Activated naive CD4-positive, alpha-beta T cell treated with anti-CD3 and anti-CD28 coated beads for 36 hours (primary cell): ENCODE measurements at regions of chr22 and their contacts with region 1.

Region 1: GRCh38 chr22:22463855-22464540 is 44.5 kb downstream of the ZNF280B start:
- DNase-seq: peak; percentile 75
- H3K4me3 Mint-ChIP-seq: no peak overlapping the region
- H3K27ac Mint-ChIP-seq: no peak overlapping the region
- H3K4me1 Mint-ChIP-seq: no peaks in the 10 kb centered on the region
- H3K27me3 Mint-ChIP-seq: peaks cover 27% of the 10 kb centered on the region

Region 2: GRCh38 chr22:22417495-22418162 is 46.4 kb before region 1 on chr22:
- CTCF ChIA-PET with region 1: interaction called, 11 read pairs
- intact Hi-C with region 1: no loop called
- DNase-seq: no peak
- H3K4me3 Mint-ChIP-seq: no peak overlapping the region
- H3K27ac Mint-ChIP-seq: no peak overlapping the region
- H3K4me1 Mint-ChIP-seq: no peaks in the 10 kb centered on the region
- H3K27me3 Mint-ChIP-seq: peaks cover 41% of the 10 kb centered on the region

Region 3: DNA sequence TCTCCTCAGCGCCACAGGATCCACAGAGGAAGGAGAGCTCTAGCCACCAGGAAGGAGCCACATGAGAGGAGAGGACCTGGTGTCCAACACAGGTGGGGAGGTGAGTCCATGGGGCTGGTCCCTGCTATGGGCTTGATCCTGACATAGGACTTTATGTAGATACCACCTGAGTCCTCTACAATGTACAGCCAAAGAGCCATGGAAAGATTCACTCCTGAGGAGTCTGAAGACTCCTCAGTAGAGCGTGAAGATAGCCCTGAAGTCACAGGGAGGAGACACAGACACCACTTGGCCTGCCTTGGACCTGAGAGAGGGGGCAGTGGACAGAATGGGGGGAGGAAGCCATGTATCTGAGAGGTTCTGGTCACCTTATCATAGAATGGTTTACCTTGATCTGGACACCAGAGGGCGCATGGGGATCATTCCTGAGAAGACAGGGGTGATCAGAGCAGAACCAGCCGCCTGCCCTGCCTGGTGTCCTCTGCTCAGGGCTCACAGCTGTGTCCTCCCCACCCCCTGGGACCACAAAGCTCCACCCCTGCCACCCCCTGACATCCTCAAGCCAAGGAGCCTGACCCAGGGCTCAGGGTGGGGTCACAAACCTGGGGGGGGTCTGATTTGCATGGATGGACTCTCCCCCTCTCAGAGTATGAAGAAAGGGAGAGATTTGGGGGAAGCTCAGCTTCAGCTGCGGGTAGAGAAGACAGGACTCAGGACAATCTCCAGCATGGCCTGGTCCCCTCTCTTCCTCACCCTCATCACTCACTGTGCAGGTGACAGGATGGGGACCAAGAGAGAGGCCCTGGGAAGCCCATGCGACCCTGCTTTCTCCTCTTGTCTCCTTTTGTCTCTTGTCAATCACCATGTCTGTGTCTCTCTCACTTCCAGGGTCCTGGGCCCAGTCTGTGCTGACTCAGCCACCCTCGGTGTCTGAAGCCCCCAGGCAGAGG is 32.5 kb before region 1 on chr22:
- CTCF ChIA-PET with region 1: interaction called, 19 read pairs
- intact Hi-C with region 1: no loop called
- DNase-seq: peak; percentile 79
- H3K4me3 Mint-ChIP-seq: no peak overlapping the region
- H3K27ac Mint-ChIP-seq: no peak overlapping the region
- H3K4me1 Mint-ChIP-seq: no peaks in the 10 kb centered on the region
- H3K27me3 Mint-ChIP-seq: peaks cover 2% of the 10 kb centered on the region

Region 4: DNA sequence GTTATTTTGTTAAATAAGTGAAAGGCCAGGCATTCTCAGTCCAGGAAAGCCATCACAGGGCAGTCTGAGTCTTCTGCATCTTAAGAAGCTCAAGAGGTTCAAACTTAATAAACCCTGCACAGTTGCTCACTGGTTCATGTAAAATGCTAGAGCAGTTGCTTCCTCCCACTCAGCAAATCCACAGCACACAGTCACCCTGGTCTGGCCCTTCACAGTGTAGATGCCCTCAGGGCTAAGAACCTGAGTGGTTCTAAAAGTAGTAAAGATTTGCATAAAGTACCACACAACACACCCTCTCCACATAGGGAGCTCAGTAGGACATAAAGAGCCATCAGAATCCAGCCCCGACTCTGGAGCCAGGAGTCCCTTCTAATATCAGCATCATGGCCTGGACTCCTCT is 14.2 kb before region 1 on chr22:
- CTCF ChIA-PET with region 1: interaction called, 13 read pairs
- intact Hi-C with region 1: no loop called
- DNase-seq: no peak
- H3K4me3 Mint-ChIP-seq: no peak overlapping the region
- H3K27ac Mint-ChIP-seq: no peak overlapping the region
- H3K4me1 Mint-ChIP-seq: no peaks in the 10 kb centered on the region
- H3K27me3 Mint-ChIP-seq: peaks cover 28% of the 10 kb centered on the region

Region 5: GRCh38 chr22:22484023-22484422 is 20.0 kb after region 1 on chr22:
- CTCF ChIA-PET with region 1: no interaction called
- intact Hi-C with region 1: no loop called
- DNase-seq: no peak
- H3K4me3 Mint-ChIP-seq: no peak overlapping the region
- H3K27ac Mint-ChIP-seq: no peak overlapping the region
- H3K4me1 Mint-ChIP-seq: no peaks in the 10 kb centered on the region
- H3K27me3 Mint-ChIP-seq: no peaks in the 10 kb centered on the region

Region 6: DNA sequence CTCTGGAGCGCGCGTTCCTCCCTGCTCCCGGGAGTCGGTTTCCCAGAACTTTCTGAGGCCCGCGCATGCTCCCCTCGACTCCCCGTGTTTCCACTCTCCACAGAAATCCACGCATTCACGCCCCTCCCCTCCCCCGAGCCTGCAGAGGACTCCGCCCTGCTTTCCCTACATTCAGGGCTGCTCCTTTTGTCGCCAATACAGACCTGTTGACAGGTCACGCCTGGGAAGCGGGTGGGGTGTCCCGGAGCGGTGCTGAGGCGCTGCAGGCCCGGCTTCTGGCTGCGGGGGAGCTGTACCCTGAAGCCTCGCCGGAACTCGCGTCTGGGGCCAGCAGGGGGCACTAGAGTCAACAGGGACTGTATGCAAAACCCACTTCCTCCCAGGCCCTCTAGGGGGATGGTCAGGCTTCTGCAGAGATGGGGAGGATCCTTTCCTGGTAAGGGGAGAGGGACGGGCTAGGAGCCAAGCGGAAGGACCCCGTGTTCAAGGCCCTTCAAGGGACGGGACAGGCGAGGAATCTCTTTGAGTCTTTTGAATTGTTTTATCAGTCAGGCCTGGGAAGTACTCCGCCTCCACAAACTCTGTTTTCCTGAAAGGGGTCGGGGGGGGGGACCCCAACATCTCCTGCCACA is 95.1 kb after region 1 on chr22 and contains the start of gene PRAME:
- CTCF ChIA-PET with region 1: interaction called, 3 read pairs
- intact Hi-C with region 1: loop called (anchors 2 kb)
- DNase-seq: peak; percentile 89
- H3K4me3 Mint-ChIP-seq: no peak within 1 kb of the TSS
- H3K27ac Mint-ChIP-seq: no peak within 1 kb of the TSS
- H3K4me1 Mint-ChIP-seq: peaks cover 2% of the 10 kb centered on the region
- H3K27me3 Mint-ChIP-seq: no peaks in the 10 kb centered on the region
- total RNA-seq, gene PRAME: not detected

Region 7: GRCh38 chr22:22576244-22576988 is 112.4 kb after region 1 on chr22:
- CTCF ChIA-PET with region 1: interaction called, 44 read pairs
- intact Hi-C with region 1: no loop called
- DNase-seq: peak; percentile 55
- H3K4me3 Mint-ChIP-seq: no peak overlapping the region
- H3K27ac Mint-ChIP-seq: no peak overlapping the region
- H3K4me1 Mint-ChIP-seq: no peaks in the 10 kb centered on the region
- H3K27me3 Mint-ChIP-seq: no peaks in the 10 kb centered on the region

Region 8: GRCh38 chr22:22587577-22588188 is 123.7 kb after region 1 on chr22:
- CTCF ChIA-PET with region 1: interaction called, 44 read pairs
- intact Hi-C with region 1: loop called (anchors 2 kb)
- DNase-seq: no peak
- H3K4me3 Mint-ChIP-seq: no peak overlapping the region
- H3K27ac Mint-ChIP-seq: no peak overlapping the region
- H3K4me1 Mint-ChIP-seq: no peaks in the 10 kb centered on the region
- H3K27me3 Mint-ChIP-seq: peaks cover 4% of the 10 kb centered on the region